Left lung (tissue), 14 donors: ENCODE measurements at regions of chr1 and their contacts with region 1.

Region 1: DNA sequence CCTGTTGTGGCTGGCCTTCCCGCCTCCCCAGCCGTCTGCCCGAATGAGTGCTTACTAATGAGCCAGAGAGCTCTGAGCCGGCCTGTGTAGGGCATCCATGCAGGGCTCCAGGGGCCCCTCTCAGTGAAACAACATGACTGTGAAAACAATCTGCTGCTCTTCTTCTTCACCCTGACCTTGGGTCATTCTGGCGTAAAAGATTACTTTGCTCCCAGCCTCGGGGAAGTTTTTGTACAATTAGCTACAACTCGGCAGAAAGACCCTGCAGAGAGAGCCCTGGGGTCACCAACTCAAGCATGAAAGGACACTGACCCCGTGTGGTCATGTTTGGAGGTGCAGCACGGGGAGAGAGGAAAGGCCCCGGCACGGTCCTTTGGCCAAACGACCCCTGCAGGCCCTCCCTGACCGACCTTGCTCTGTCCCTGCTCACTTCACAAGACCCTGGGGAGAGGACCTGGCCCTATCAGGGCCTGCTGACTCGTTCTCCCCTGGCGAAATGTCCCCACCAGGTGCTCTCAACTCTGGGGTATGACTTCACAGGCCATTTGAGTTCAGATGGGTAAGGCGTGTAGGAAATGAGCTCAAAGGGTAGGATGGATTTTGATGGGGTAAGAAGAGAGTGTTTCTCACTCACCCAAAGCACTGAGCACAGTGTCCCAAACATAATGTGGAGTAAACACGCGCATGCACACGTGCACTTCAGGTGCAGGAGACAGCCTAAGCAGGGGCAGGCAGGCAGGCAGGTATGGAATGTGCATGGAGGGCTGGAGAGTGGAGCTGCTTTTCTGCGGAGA is 22.9 kb upstream of the FAM20B start:
- DNase-seq: peak; percentile 52 to 82 (median 74)
- ATAC-seq: peak; percentile 94
- H3K4me3 ChIP-seq: no peak overlapping the region
- H3K27ac ChIP-seq: no peak overlapping the region
- H3K4me1 ChIP-seq: peaks cover 0 to 6% of the 10 kb centered on the region in 2 donors
- H3K27me3 ChIP-seq: no peaks in the 10 kb centered on the region
- CTCF ChIP-seq: peak; percentile 93 to 96

Region 2: DNA sequence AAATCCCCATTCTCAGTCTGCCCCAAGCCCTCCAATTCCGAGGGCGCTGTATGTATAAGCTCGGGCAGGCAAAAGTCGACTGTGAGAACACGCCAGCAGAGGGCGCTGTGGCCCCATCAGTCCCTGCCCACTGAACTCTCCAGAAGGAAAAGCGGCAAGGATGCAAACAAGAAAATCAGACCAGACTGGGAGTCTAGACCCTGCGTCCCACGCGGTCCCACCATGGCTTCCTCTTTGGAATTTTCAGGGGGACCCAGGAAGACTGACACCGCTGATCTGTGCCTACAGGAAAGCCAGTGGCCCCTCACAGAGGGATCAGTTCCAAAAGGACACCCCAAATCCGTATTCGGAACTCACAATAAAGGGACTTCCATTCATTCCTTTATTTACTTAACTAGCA is 470.4 kb before region 1 on chr1:
- intact Hi-C with region 1: loop called in 1 of 2 experiments (anchors 10 kb)
- DNase-seq: peak; percentile 72 to 94 (median 84)
- ATAC-seq: peak; percentile 91
- H3K4me3 ChIP-seq: no peak overlapping the region
- H3K27ac ChIP-seq: no peak overlapping the region
- H3K4me1 ChIP-seq: peaks cover 0 to 5% of the 10 kb centered on the region in 2 donors
- H3K27me3 ChIP-seq: no peaks in the 10 kb centered on the region
- CTCF ChIP-seq: peak; percentile 87 to 91

Region 3: GRCh38 chr1:178684542-178685000 is 318.2 kb before region 1 on chr1:
- intact Hi-C with region 1: no loop called
- DNase-seq: no peak
- ATAC-seq: peak; percentile 59
- H3K4me3 ChIP-seq: no peak overlapping the region
- H3K27ac ChIP-seq: no peak overlapping the region
- H3K4me1 ChIP-seq: no peaks in the 10 kb centered on the region
- H3K27me3 ChIP-seq: no peaks in the 10 kb centered on the region
- CTCF ChIP-seq: no peak

Region 4: GRCh38 chr1:178774263-178774662 is 228.5 kb before region 1 on chr1:
- intact Hi-C with region 1: loop called in 1 of 2 experiments (anchors 5 kb)
- DNase-seq: peak in 2 of 4 donors; percentile 15 to 44
- ATAC-seq: peak; percentile 24
- H3K4me3 ChIP-seq: no peak overlapping the region
- H3K27ac ChIP-seq: no peak overlapping the region
- H3K4me1 ChIP-seq: no peaks in the 10 kb centered on the region
- H3K27me3 ChIP-seq: no peaks in the 10 kb centered on the region
- CTCF ChIP-seq: peak; percentile 5 to 45

Region 5: DNA sequence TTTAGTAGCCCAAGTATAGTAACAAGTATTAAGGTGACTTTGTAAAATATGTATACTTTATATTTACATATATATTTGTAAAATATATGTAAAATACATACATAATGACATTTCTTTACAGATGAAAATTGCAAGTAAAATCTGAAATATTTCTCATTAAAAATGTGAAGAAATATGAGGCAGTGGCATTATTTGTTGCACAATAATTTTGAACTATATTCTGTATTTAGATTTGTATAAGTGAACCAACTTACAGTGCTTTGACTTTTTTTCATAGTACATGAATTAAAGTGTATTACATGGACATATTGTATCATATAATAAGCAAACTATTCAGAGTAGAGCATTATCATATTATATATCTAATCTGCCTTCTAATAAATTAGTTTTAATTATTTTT is 192.2 kb before region 1 on chr1:
- intact Hi-C with region 1: loop called in 1 of 2 experiments (anchors 5 kb)
- DNase-seq: no peak
- ATAC-seq: no peak
- H3K4me3 ChIP-seq: no peak overlapping the region
- H3K27ac ChIP-seq: no peak overlapping the region
- H3K4me1 ChIP-seq: no peaks in the 10 kb centered on the region
- H3K27me3 ChIP-seq: no peaks in the 10 kb centered on the region
- CTCF ChIP-seq: no peak

Region 6: GRCh38 chr1:179253286-179253972 is 250.7 kb after region 1 on chr1:
- intact Hi-C with region 1: no loop called
- DNase-seq: no peak
- ATAC-seq: no peak
- H3K4me3 ChIP-seq: no peak overlapping the region
- H3K27ac ChIP-seq: no peak overlapping the region
- H3K4me1 ChIP-seq: no peaks in the 10 kb centered on the region
- H3K27me3 ChIP-seq: no peaks in the 10 kb centered on the region
- CTCF ChIP-seq: no peak